ENCODE measurements at regions of chr1 and their contacts with region 1.

Region 1: GRCh38 chr1:88998716-88999115 is 6.3 kb upstream of the KYAT3 start:
- DNase-seq: peak in 4 of 14 experiments; percentile 32 to 85 (median 84)
- ATAC-seq: peak; percentile 88
- H3K4me3 ChIP-seq: no peak overlapping the region
- H3K4me3 Mint-ChIP-seq: peak overlapping the region; percentile 50
- H3K27ac ChIP-seq: no peak overlapping the region
- H3K27ac Mint-ChIP-seq: no peak overlapping the region
- H3K4me1 ChIP-seq: peaks cover 12% of the 10 kb centered on the region
- H3K4me1 Mint-ChIP-seq: peaks cover 40% of the 10 kb centered on the region
- H3K27me3 ChIP-seq: no peaks in the 10 kb centered on the region
- H3K27me3 Mint-ChIP-seq: no peaks in the 10 kb centered on the region
- CTCF ChIP-seq: peak; percentile 64

Region 2: DNA sequence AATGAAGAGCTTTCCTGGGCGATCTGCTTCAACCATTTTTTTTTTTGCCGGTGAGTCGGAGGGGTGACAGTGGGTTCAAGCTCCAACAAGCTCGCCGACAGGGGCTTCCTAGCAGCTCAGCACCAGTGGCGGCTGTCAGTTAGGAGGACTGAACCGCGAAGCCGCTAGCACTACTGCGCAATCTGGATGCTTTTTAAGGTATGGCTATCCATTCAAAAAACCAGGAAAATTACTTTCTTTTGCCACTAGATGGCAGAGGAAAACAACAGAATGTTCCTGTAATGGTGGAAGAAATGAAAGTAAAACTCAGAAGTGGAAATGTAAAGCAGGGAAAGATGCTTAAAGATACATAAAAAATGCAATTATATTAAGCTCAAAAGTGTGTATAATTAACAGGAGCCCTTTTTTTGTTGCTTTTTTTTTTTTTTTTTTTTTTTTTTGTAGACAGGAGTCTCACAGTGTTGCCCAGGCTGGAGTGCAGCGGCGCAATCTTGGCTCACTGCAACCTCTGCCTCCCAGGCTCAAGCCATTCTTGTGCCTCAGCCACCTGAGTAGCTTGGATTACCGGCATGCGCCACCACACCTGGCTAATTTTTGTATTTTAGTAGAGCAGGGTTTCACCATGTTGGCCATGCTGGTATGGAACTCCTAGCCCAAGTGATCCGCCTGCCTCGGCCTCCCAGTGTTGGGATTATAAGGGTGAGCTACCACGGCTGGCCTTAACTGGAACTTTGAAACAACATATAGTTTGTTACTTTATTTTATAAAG is 14.7 kb before region 1 on chr1:
- CTCF ChIA-PET with region 1: interaction called, 12 read pairs
- POLR2A ChIA-PET with region 1: interaction called, 3 read pairs
- intact Hi-C with region 1: no loop called
- DNase-seq: peak in 6 of 14 experiments; percentile 23 to 82 (median 60)
- ATAC-seq: peak; percentile 88
- H3K4me3 ChIP-seq: peak overlapping the region; percentile 9
- H3K4me3 Mint-ChIP-seq: peak overlapping the region; percentile 8
- H3K27ac ChIP-seq: no peak overlapping the region
- H3K27ac Mint-ChIP-seq: peak overlapping the region; percentile 48
- H3K4me1 ChIP-seq: peaks cover 12% of the 10 kb centered on the region
- H3K4me1 Mint-ChIP-seq: peaks cover 72% of the 10 kb centered on the region
- H3K27me3 ChIP-seq: no peaks in the 10 kb centered on the region
- H3K27me3 Mint-ChIP-seq: no peaks in the 10 kb centered on the region
- CTCF ChIP-seq: peak; percentile 81

Region 3: GRCh38 chr1:89190017-89190416 is 191.3 kb after region 1 on chr1:
- CTCF ChIA-PET with region 1: no interaction called
- POLR2A ChIA-PET with region 1: interaction called, 3 read pairs
- intact Hi-C with region 1: loop called (anchors 5 kb)
- DNase-seq: no peak
- ATAC-seq: no peak
- H3K4me3 ChIP-seq: no peak overlapping the region
- H3K4me3 Mint-ChIP-seq: no peak overlapping the region
- H3K27ac ChIP-seq: no peak overlapping the region
- H3K27ac Mint-ChIP-seq: no peak overlapping the region
- H3K4me1 ChIP-seq: peaks cover under 1% of the 10 kb centered on the region
- H3K4me1 Mint-ChIP-seq: peaks cover 25% of the 10 kb centered on the region
- H3K27me3 ChIP-seq: no peaks in the 10 kb centered on the region
- H3K27me3 Mint-ChIP-seq: no peaks in the 10 kb centered on the region
- CTCF ChIP-seq: no peak

Region 4: DNA sequence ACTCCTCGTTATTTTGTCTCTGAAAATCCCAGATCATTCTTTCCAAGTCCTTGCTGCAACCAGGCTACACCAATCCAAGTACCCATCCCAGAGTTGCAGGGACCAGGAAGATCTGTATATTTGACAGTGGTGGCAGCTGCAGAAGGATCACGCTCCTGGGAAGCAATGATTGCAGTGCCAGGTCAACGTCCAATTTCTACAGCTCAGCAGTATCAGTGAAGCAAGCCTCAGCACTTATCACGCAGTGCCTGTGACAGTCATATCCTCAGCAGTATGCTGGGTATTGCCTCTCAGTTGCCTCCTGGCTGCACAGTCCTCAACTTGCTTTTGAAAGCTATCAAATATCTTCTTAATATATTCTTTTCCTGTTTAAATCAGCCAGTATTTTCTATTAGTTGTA is 1651.7 kb after region 1 on chr1:
- CTCF ChIA-PET with region 1: no interaction called
- POLR2A ChIA-PET with region 1: no interaction called
- intact Hi-C with region 1: no loop called
- DNase-seq: no peak
- ATAC-seq: no peak
- H3K4me3 ChIP-seq: no peak overlapping the region
- H3K4me3 Mint-ChIP-seq: no peak overlapping the region
- H3K27ac ChIP-seq: no peak overlapping the region
- H3K27ac Mint-ChIP-seq: no peak overlapping the region
- H3K4me1 ChIP-seq: no peaks in the 10 kb centered on the region
- H3K4me1 Mint-ChIP-seq: no peaks in the 10 kb centered on the region
- H3K27me3 ChIP-seq: no peaks in the 10 kb centered on the region
- H3K27me3 Mint-ChIP-seq: peaks cover 38% of the 10 kb centered on the region
- CTCF ChIP-seq: no peak

Measured in CD4-positive, alpha-beta T cell (primary cell).